ENCODE measurements at regions of chr17 and their contacts with region 1.

Region 1: GRCh38 chr17:4913994-4914393 is 11.1 kb upstream of the CHRNE start:
- DNase-seq: peak; percentile 32
- H3K4me3 ChIP-seq: no peak overlapping the region
- H3K27ac ChIP-seq: no peak overlapping the region
- H3K4me1 ChIP-seq: no peaks in the 10 kb centered on the region; the same call in 1 of the 2 replicates
- H3K27me3 ChIP-seq: no peaks in the 10 kb centered on the region

Region 2: GRCh38 chr17:5050278-5050677 is 136.3 kb after region 1 on chr17:
- in situ Hi-C with region 1: loop called (anchors 10 kb)
- DNase-seq: no peak
- H3K4me3 ChIP-seq: no peak overlapping the region
- H3K27ac ChIP-seq: no peak overlapping the region
- H3K4me1 ChIP-seq: no peaks in the 10 kb centered on the region
- H3K27me3 ChIP-seq: no peaks in the 10 kb centered on the region

Measured in GM23248 (cell line).